ENCODE measurements at regions of chr9 and their contacts with region 1.

Region 1: DNA sequence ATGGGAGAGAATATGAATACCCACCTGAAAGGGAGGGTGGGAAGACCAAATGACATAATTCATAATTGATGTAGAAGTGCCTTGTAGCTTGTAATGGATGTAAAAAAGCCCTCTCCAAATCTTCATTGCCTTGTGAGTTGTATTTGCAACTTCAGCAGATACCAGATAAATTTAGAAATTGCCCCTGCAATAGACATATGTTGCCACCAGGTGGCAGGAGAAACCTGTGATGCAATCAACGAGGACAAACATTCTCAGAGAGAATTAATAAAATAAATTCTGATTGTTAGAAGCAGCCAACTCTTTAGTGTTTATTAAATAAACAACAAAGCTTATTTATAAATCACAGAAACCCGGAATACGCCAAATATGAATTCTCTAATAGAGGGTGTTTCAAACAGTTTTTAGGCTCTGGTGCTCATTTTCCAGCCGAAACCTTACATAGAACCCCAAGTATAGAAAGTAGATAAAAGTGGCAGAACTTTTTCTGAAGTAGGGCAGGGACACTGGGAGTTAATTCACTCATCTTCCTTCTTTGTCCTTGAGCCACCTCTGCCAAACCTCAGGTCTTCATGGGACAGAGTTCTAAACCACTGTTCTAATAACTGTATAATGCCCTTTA is 147.8 kb downstream of the TMEM38B start:
- DNase-seq: peak; percentile 46
- H3K4me3 Mint-ChIP-seq: no peak overlapping the region
- H3K27ac Mint-ChIP-seq: no peak overlapping the region
- H3K4me1 Mint-ChIP-seq: no peaks in the 10 kb centered on the region
- H3K27me3 Mint-ChIP-seq: peaks cover 19% of the 10 kb centered on the region
- CTCF ChIP-seq: peak; percentile 93

Region 2: DNA sequence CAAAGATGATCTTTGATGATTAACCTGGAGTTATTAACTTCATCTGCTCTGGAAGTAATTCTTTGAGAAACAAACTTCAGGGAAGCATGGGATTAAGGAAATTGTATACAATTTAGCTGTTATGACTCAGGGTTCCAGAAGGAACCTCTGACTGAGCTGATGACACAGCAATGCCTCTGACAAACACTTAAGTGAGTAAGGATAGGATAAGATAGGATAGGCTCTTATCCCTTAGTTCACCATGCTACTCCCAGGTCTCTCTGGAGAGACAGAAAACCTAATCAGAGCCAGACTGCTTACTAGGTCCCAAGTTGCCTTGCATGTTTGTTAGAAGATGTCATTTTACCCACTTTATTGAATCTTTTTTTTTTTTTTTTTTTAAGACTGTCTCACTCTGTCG is 160.4 kb before region 1 on chr9:
- CTCF ChIA-PET with region 1: no interaction called
- POLR2A ChIA-PET with region 1: no interaction called
- intact Hi-C with region 1: no loop called
- DNase-seq: peak; percentile 13
- H3K4me3 Mint-ChIP-seq: no peak overlapping the region
- H3K27ac Mint-ChIP-seq: no peak overlapping the region
- H3K4me1 Mint-ChIP-seq: no peaks in the 10 kb centered on the region
- H3K27me3 Mint-ChIP-seq: no peaks in the 10 kb centered on the region
- CTCF ChIP-seq: no peak

Region 3: GRCh38 chr9:105828596-105829213 is 13.4 kb before region 1 on chr9:
- CTCF ChIA-PET with region 1: interaction called, 23 read pairs
- POLR2A ChIA-PET with region 1: no interaction called
- intact Hi-C with region 1: no loop called
- DNase-seq: no peak
- H3K4me3 Mint-ChIP-seq: no peak overlapping the region
- H3K27ac Mint-ChIP-seq: no peak overlapping the region
- H3K4me1 Mint-ChIP-seq: no peaks in the 10 kb centered on the region
- H3K27me3 Mint-ChIP-seq: no peaks in the 10 kb centered on the region
- CTCF ChIP-seq: no peak

Region 4: DNA sequence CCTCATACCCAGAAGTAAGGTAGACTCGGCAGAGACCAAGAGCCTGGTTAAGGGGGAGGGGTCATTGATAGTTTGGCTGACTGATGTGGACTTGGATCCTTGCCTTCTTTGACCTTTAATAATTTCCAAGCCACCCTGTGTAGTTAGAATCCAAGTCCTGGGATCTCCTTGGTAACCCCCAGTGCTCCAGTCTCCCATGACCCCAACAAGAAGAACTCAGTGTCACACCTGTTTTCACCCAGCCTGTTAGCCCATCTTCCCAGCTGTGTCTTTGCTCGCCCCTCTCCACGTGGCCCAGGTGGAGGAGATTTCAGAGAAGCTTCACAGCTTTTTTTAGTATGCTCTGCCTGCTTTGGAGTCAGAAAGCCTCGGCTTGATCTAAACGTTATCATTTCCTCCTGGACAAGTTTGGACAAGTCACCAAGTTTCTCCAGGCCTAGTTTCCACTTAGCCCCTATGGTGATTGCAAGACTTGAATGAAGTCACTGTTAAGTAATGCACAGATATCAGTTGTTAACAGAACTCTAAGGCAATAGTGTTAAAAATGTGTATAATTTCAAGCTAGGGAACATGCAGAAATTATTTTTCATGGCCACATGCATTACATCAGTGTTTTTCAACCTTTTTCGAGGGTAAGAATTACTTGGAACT is 22.2 kb after region 1 on chr9:
- CTCF ChIA-PET with region 1: interaction called, 33 read pairs
- POLR2A ChIA-PET with region 1: interaction called, 3 read pairs
- intact Hi-C with region 1: no loop called
- DNase-seq: peak; percentile 49
- H3K4me3 Mint-ChIP-seq: peak overlapping the region; percentile 24
- H3K27ac Mint-ChIP-seq: peak overlapping the region; percentile 96
- H3K4me1 Mint-ChIP-seq: peaks cover 21% of the 10 kb centered on the region
- H3K27me3 Mint-ChIP-seq: no peaks in the 10 kb centered on the region
- CTCF ChIP-seq: no peak

Region 5: GRCh38 chr9:105908069-105908468 is 65.9 kb after region 1 on chr9:
- CTCF ChIA-PET with region 1: interaction called, 14 read pairs
- POLR2A ChIA-PET with region 1: no interaction called
- intact Hi-C with region 1: no loop called
- DNase-seq: peak; percentile 49
- H3K4me3 Mint-ChIP-seq: no peak overlapping the region
- H3K27ac Mint-ChIP-seq: no peak overlapping the region
- H3K4me1 Mint-ChIP-seq: peaks cover 17% of the 10 kb centered on the region
- H3K27me3 Mint-ChIP-seq: no peaks in the 10 kb centered on the region
- CTCF ChIP-seq: no peak

Region 6: DNA sequence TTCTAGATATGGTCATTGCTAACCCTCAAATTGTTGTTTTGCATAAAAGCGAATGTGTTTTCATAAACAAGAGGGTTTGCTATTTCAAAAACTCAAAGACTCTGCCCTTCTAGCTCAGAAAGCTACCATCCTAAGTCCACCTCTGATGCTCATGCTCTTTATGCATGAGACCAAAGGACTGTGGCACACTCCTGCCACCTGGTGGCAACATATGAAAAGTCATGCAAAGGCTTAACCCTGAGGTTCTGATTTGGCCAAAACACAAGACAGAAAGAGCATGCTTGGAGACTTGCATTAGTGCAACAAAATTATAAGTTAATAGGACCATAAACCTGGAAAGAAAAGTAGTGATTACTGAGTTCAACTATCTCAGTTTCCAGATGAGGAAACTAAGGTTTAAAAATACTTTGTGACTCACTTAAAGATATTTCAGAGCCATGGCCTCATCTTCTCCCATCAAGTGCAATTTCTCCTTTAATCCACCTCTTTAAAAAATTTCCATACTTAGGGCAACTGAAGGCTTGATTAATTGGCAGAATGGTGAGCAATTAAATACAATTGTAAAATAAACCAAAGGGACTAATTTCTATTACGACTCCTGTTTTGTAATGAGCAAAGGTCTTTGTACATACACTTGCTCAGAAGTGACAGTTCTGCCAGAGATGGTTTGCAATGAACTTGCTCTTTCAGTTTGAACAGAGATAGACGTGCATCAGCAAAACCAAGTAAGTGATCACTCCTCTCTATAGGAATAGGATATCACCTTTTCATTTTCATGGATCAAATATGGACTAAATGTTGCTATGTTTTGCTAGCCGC is 1330.2 kb after region 1 on chr9:
- CTCF ChIA-PET with region 1: interaction called, 46 read pairs
- POLR2A ChIA-PET with region 1: no interaction called
- intact Hi-C with region 1: loop called (anchors 1 kb)
- DNase-seq: peak; percentile 84
- H3K4me3 Mint-ChIP-seq: no peak overlapping the region
- H3K27ac Mint-ChIP-seq: no peak overlapping the region
- H3K4me1 Mint-ChIP-seq: peaks cover 8% of the 10 kb centered on the region
- H3K27me3 Mint-ChIP-seq: no peaks in the 10 kb centered on the region
- CTCF ChIP-seq: peak; percentile 87